Dendritic cell treated with granulocyte-macrophage colony-stimulating factor and Interleukin-4, amounts not matched to agents 40 ng/mL and 50 ng/mL, for 4 days (primary cell): ENCODE measurements at regions of chr7 and their contacts with region 1.

Region 1: DNA sequence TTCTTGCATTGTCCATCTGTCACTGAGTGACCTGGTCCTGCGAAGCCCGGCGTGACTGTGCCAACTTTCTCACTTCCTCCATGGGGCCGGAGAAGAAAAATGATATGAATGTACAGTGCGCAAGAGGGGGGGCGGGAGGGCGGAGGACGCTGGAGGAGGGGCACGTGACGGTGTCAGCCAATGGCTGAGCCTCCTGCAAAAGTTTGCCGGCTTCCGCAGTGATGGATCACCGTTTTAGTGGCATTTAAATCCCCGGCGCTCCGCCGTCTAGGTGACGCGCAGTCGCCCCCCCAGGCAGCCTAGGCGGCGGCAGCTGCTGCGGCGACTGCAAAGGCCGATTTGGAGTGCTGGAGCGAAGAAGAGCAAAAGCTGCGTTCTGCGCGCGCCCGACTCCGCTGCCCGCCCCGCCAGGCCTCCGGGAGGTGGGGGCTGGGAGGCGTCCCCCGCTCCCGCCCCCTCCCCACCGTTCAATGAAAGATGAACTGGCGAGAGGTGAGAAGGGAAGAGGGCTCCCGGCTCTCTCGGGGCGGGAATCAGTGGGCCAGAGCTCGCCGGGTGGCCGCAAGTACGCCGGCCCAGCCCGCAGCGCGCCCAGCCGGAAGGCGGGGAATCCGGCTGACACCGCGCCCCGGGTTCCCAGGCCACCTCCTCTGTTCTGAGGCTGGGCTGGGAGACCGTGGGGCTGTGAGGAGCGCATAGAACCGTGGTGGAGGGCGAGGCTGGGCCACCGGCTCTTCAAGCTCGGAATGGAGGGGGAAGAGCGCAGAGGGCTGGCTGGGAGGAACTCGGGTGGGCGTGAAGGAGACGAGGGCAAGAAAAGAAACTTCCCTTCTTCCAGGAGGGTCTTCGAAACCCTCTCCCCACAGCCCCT is at the start of gene HOXA1:
- H3K4me3 Mint-ChIP-seq: peak within 1 kb of the TSS; percentile 91
- H3K27ac Mint-ChIP-seq: peak within 1 kb of the TSS; percentile 95
- H3K4me1 Mint-ChIP-seq: peaks cover 70% of the 10 kb centered on the region
- H3K27me3 Mint-ChIP-seq: peaks cover 84% of the 10 kb centered on the region

Region 2: DNA sequence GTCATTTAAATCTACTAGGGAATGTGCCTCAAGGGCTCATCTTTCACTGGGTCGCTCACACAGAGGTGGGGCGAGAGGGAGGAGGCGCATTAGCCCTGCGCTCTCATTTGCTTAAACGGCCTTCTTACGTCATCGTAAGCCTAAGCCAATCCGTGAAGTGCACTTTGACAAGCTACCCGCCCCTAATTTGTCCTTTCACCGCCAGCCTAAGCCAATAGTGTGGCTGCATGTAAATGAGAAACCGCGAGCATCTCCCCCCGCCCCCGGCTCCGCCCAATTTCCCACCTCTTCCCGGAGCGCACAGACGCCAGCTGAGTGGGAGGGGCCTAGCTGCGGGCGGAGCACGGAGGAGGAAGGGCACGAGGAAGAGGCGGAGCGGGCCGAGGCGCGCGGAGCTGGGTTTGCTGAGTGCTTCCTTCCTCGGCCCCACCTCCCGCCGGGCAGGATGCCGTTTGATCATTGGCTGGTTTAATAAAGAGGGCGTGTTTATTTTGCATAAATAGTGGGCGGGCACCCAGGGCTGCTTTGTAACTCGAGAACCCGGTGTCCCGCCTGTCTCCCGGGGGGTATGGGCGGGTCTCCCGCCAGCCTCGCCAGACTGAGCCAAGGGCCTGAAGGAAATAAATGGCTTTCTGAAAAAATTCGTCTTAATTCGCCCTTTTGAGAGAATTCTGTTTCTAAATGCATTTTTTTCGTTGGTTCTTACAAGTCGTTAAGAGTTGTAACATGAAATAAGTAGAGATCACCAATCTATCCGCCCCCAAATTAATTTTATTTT is 1233.7 kb before region 1 on chr7:
- intact Hi-C with region 1: loop called (anchors 10 kb)
- H3K4me3 Mint-ChIP-seq: peak overlapping the region; percentile 61
- H3K27ac Mint-ChIP-seq: no peak overlapping the region
- H3K4me1 Mint-ChIP-seq: peaks cover 33% of the 10 kb centered on the region
- H3K27me3 Mint-ChIP-seq: peaks cover 16% of the 10 kb centered on the region

Region 3: GRCh38 chr7:26398756-26399501 is 697.2 kb before region 1 on chr7:
- intact Hi-C with region 1: loop called (anchors 2 kb)
- H3K4me3 Mint-ChIP-seq: peak overlapping the region; percentile 98
- H3K27ac Mint-ChIP-seq: peak overlapping the region; percentile 97
- H3K4me1 Mint-ChIP-seq: peaks cover 46% of the 10 kb centered on the region
- H3K27me3 Mint-ChIP-seq: peaks cover 6% of the 10 kb centered on the region

Region 4: DNA sequence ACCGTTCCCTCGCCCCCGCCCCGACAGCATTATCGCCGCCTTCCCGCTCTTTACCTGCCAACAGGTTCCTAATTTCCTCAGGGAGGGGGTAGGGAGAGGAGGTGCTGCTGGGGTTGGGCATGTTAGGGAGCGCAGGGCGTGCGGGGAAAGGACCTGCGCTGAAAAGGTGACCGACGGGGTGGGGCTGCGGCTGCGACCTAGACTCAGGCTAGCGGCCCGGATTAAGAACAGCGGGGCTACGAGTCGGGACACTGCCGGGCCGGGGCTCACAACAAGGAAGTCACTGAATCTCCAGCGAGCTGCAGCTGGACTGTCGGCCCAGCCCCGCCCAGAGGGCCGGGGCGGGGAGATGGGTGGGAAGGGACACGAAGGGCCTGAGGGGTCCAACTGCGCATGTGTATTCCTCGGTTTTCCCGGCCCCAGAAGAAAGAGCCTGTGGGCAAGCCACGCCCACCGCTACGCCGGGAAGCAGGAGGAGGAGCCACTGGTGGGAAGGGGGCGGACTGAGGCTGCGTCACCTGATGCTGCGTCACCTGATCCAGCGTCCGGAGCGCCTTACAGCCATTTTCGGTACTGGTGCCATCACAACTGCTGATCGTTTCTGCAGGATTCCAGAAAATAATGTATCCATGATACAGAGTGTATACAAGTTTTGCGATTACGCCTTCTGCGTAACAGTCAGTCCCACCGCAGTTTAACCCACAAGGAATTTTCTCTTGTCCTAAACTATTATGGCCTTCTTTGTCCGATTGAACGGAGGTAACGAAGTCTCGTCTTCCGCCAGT is 231.6 kb before region 1 on chr7 and contains the start of gene SKAP2:
- intact Hi-C with region 1: loop called (anchors 2 kb)
- H3K4me3 Mint-ChIP-seq: peak within 1 kb of the TSS; percentile 100
- H3K27ac Mint-ChIP-seq: peak within 1 kb of the TSS; percentile 100
- H3K4me1 Mint-ChIP-seq: peaks cover 20% of the 10 kb centered on the region
- H3K27me3 Mint-ChIP-seq: no peaks in the 10 kb centered on the region

Region 5: GRCh38 chr7:27130540-27131389 is 34.6 kb after region 1 on chr7 and contains the start of gene HOXA4:
- intact Hi-C with region 1: loop called (anchors 1 kb)
- H3K4me3 Mint-ChIP-seq: peak within 1 kb of the TSS; percentile 80
- H3K27ac Mint-ChIP-seq: peak within 1 kb of the TSS; percentile 91
- H3K4me1 Mint-ChIP-seq: peaks cover 16% of the 10 kb centered on the region
- H3K27me3 Mint-ChIP-seq: peaks cover 38% of the 10 kb centered on the region

Region 6: GRCh38 chr7:27150568-27151340 is 54.6 kb after region 1 on chr7:
- intact Hi-C with region 1: loop called (anchors 10 kb)
- H3K4me3 Mint-ChIP-seq: peak overlapping the region; percentile 70
- H3K27ac Mint-ChIP-seq: peak overlapping the region; percentile 7
- H3K4me1 Mint-ChIP-seq: peaks cover 58% of the 10 kb centered on the region
- H3K27me3 Mint-ChIP-seq: peaks cover 98% of the 10 kb centered on the region